A673 (cell line): ENCODE measurements at regions of chr4 and their contacts with region 1.

Region 1: GRCh38 chr4:169846396-169846795 is 88.7 kb upstream of the HPF1 start:
- DNase-seq: no peak
- H3K4me3 ChIP-seq: no peak overlapping the region
- H3K27ac ChIP-seq: no peak overlapping the region
- H3K4me1 ChIP-seq: peaks cover 7% of the 10 kb centered on the region
- H3K27me3 ChIP-seq: no peaks in the 10 kb centered on the region
- CTCF ChIP-seq: no peak

Region 2: GRCh38 chr4:169659716-169660670 is 186.4 kb before region 1 on chr4:
- CTCF ChIA-PET with region 1: no interaction called
- POLR2A ChIA-PET with region 1: interaction called, 14 read pairs
- intact Hi-C with region 1: no loop called
- DNase-seq: peak; percentile 98
- H3K4me3 ChIP-seq: peak overlapping the region; percentile 48
- H3K27ac ChIP-seq: peak overlapping the region; percentile 94
- H3K4me1 ChIP-seq: peaks cover 41% of the 10 kb centered on the region
- H3K27me3 ChIP-seq: no peaks in the 10 kb centered on the region
- CTCF ChIP-seq: no peak

Region 3: GRCh38 chr4:169861593-169861992 is 15.2 kb after region 1 on chr4:
- CTCF ChIA-PET with region 1: interaction called, 16 read pairs
- POLR2A ChIA-PET with region 1: no interaction called
- intact Hi-C with region 1: no loop called
- DNase-seq: no peak
- H3K4me3 ChIP-seq: no peak overlapping the region
- H3K27ac ChIP-seq: no peak overlapping the region
- H3K4me1 ChIP-seq: no peaks in the 10 kb centered on the region
- H3K27me3 ChIP-seq: peaks cover 10% of the 10 kb centered on the region
- CTCF ChIP-seq: no peak

Region 4: GRCh38 chr4:170122252-170122651 is 275.9 kb after region 1 on chr4:
- CTCF ChIA-PET with region 1: no interaction called
- POLR2A ChIA-PET with region 1: no interaction called
- intact Hi-C with region 1: no loop called
- DNase-seq: no peak
- H3K4me3 ChIP-seq: no peak overlapping the region
- H3K27ac ChIP-seq: no peak overlapping the region
- H3K4me1 ChIP-seq: no peaks in the 10 kb centered on the region
- H3K27me3 ChIP-seq: no peaks in the 10 kb centered on the region
- CTCF ChIP-seq: no peak